SK-N-SH (cell line): ENCODE measurements at regions of chr17 and their contacts with region 1.

Region 1: DNA sequence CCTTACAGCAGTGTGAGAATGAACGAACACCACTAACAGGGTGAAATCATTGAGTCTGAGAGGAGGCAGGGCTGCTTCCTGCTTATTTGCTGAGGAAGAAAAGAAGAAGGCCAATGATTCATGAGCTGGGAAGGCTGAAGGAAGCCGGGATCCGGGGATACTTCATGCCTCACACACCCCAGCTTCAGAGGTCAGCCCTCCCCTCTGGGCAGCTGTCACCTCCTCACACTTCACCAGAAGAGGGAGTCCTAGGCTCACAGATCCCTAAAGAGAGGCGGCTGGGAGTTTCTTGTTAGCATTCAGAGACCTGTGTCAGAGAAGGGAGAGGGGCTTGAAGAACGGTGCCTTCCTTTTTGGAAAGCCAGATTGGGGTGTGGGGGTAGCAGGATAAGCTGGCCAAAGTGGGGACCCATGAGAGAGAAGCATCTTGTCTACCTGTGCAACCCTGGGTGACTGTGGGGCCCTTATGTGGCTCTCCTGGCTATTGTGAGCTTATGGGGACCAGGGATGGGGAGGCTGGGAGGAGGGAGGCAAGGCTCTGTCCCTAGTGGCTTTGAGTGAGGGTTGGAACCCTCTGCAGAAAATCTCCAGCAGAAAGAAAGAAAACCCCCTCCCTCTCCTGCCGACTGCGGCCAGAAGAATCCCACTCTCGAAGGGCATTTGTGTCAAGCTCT is 94.6 kb downstream of the RGS9 start:
- DNase-seq: peak; percentile 86
- H3K4me3 ChIP-seq: peak overlapping the region in 1 of 2 experiments; percentile 20; a peak in 1 of 4 replicates
- H3K27ac ChIP-seq: no peak overlapping the region
- H3K4me1 ChIP-seq: peaks cover 10 to 29% of the 10 kb centered on the region in 2 experiments; a peak in 3 of 4 replicates
- H3K27me3 ChIP-seq: no peaks in the 10 kb centered on the region
- CTCF ChIP-seq: peak; percentile 97
- EP300 ChIP-seq: no peak
- RAD21 ChIP-seq: peak; percentile 98

Region 2: GRCh38 chr17:65208717-65209116 is 23.1 kb before region 1 on chr17:
- CTCF ChIA-PET with region 1: interaction called, 10 read pairs
- POLR2A ChIA-PET with region 1: no interaction called
- DNase-seq: no peak
- H3K4me3 ChIP-seq: no peak overlapping the region
- H3K27ac ChIP-seq: no peak overlapping the region
- H3K4me1 ChIP-seq: no peaks in the 10 kb centered on the region
- H3K27me3 ChIP-seq: no peaks in the 10 kb centered on the region
- CTCF ChIP-seq: no peak
- EP300 ChIP-seq: no peak
- RAD21 ChIP-seq: no peak

Region 3: DNA sequence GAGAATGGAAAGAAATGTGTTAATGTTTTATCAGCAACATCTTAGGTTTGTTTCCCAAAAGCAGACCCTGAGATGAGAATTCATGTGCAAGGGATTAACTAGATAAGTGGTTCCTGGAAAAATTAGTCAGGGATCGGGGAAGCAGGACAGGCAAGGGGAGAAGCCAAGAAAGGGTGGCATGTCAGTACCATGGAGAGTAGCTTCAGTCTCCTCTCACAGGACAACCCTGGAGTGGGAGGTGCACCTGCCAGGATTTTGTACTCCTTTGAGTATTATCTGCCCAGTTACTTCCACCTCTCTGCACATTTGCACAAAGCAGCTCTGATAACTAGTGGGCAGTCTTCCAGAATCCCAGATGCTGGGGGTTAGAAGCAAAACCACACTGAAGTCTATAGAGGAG is 22.4 kb after region 1 on chr17:
- CTCF ChIA-PET with region 1: interaction called, 36 read pairs
- POLR2A ChIA-PET with region 1: no interaction called
- DNase-seq: no peak
- H3K4me3 ChIP-seq: no peak overlapping the region
- H3K27ac ChIP-seq: no peak overlapping the region
- H3K4me1 ChIP-seq: no peaks in the 10 kb centered on the region
- H3K27me3 ChIP-seq: peaks cover 5% of the 10 kb centered on the region; the same call in 1 of the 2 replicates
- CTCF ChIP-seq: no peak
- EP300 ChIP-seq: no peak
- RAD21 ChIP-seq: no peak

Region 4: GRCh38 chr17:65278050-65278819 is 46.4 kb after region 1 on chr17:
- CTCF ChIA-PET with region 1: interaction called, 22 read pairs
- POLR2A ChIA-PET with region 1: no interaction called
- DNase-seq: peak; percentile 89
- H3K4me3 ChIP-seq: no peak overlapping the region
- H3K27ac ChIP-seq: no peak overlapping the region
- H3K4me1 ChIP-seq: no peaks in the 10 kb centered on the region; a peak in 1 of 4 replicates
- H3K27me3 ChIP-seq: no peaks in the 10 kb centered on the region
- CTCF ChIP-seq: peak; percentile 87
- EP300 ChIP-seq: no peak
- RAD21 ChIP-seq: peak; percentile 91

Region 5: DNA sequence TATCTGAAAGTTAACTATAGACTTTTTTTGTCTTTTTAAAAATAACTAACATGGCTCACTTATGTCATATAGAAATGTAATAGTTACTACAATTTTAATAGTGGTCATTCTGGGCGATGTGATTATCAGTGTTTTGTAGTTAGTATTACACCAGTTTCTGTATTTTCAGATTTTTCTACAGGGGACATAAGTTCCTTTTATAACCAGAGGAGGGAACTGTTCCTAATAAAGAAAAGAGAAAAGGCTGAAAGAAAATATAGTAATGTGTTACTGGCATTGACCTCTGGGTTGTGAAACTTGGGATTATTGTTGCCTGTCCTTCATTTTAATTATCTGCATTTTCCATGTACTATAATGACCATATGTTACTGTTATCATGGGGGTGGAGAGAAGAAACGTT is 190.9 kb after region 1 on chr17:
- CTCF ChIA-PET with region 1: no interaction called
- POLR2A ChIA-PET with region 1: no interaction called
- DNase-seq: no peak
- H3K4me3 ChIP-seq: no peak overlapping the region
- H3K27ac ChIP-seq: no peak overlapping the region
- H3K4me1 ChIP-seq: no peaks in the 10 kb centered on the region
- H3K27me3 ChIP-seq: no peaks in the 10 kb centered on the region
- CTCF ChIP-seq: peak; percentile 31; the same call in 1 of the 2 replicates
- EP300 ChIP-seq: no peak
- RAD21 ChIP-seq: no peak

Region 6: DNA sequence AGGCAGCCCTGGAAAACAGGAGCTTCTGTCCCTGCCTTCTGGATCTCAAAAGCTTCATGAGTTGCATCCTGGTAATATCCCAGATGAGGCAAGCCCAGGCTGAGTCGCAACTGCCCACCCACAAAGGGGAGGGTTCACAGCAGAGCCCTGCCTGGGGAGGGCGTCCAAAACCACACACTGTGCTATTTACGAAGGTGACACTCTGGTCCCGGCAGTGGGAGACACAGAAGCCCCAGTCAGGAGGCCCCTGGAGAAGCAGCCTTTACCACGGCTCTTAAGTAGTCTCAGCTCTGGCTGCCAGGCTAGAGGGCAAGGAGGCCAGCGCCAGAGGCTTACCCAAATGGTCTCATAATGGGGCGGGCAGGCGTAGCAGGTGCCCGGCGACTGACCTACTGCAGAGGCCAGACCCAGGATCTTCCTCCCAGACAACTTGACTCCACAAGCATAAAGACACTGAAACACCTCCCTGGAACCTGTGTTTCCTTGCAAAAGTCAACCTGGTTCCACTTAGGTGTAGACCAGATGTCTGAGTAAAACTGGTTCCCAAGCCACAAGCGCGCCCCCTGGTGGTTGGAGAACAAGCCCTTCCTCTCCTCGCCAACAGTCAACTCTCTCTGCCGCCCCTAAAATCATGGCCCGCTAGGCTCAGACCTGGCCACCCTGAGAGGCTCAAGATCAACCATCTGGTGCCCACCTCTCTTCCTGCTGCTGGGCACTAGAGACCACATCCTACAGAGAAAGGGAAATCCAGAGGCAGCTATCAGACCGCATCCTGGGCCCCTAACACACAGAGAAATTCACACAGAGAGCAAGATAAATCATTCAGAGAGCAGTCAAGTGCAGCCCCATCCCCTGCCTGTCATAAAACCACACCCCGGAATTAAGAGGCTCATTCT is 324.5 kb after region 1 on chr17:
- CTCF ChIA-PET with region 1: interaction called, 29 read pairs
- POLR2A ChIA-PET with region 1: no interaction called
- DNase-seq: peak; percentile 81
- H3K4me3 ChIP-seq: peak overlapping the region in 1 of 2 experiments; percentile 24; a peak in 1 of 4 replicates
- H3K27ac ChIP-seq: no peak overlapping the region
- H3K4me1 ChIP-seq: peaks cover 13 to 24% of the 10 kb centered on the region in 2 experiments; a peak in 3 of 4 replicates
- H3K27me3 ChIP-seq: no peaks in the 10 kb centered on the region
- CTCF ChIP-seq: peak; percentile 95
- EP300 ChIP-seq: no peak
- RAD21 ChIP-seq: peak; percentile 74

Region 7: DNA sequence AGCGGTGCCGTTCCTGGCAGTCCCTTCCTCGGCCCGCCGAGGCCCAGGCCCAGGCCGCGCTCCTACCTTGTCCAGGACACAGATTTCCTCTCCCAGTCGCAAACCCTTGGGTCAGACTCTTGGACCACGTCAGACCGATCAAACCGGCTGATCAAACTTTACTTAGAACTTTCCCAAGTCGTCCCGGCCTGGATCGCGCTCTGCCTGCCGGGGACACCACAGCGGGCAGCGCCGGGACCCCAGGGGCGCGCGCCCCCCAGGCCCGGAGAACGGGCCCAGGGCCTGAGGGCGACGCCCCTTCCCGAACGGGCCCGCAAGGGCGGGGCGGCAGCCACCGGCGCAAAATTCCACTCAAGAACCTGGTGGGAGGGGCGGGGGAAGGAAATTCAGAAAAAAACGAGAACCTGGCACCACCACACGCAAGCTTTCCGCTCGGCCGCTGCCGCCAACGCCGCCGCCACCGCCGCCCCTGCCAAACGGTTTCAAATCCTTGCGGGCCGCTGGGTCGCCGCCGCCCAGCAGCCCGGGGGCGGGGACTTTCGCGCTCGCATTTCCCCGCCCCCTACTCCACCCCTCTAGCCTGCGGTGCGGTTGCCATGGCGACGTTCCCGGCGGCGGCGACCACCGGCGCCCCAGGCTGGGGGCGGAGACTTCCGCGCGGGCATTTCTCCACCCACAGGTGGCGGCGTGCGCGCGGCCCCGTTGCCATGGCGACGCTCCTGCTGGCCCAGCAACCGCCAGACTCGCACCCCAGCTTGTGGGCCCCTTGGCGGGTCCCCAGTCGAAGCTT is 960.0 kb after region 1 on chr17 and contains the start of gene CEP112:
- CTCF ChIA-PET with region 1: interaction called, 15 read pairs
- POLR2A ChIA-PET with region 1: no interaction called
- DNase-seq: peak; percentile 97
- H3K4me3 ChIP-seq: peak within 1 kb of the TSS; percentile 68 to 85
- H3K27ac ChIP-seq: peak within 1 kb of the TSS; percentile 51 to 66
- H3K4me1 ChIP-seq: peaks cover 7 to 8% of the 10 kb centered on the region in 2 experiments; a peak in 3 of 4 replicates
- H3K27me3 ChIP-seq: no peaks in the 10 kb centered on the region
- CTCF ChIP-seq: no peak
- EP300 ChIP-seq: no peak; a peak in 1 of 4 replicates
- RAD21 ChIP-seq: no peak
- polyA plus RNA-seq, gene CEP112: 7.9 and 10.6 TPM in 2 replicates